Activated CD4-positive, alpha-beta T cell treated with anti-CD3 and anti-CD28 coated beads for 36 hours (primary cell): ENCODE measurements at regions of chr6 and their contacts with region 1.

Region 1: GRCh38 chr6:97282726-97283617 is at the start of gene MMS22L:
- DNase-seq: peak; percentile 96
- ATAC-seq: peak; percentile 98
- H3K4me3 Mint-ChIP-seq: peak within 1 kb of the TSS; percentile 76
- H3K27ac Mint-ChIP-seq: peak within 1 kb of the TSS; percentile 79
- H3K4me1 Mint-ChIP-seq: peaks cover 23% of the 10 kb centered on the region
- H3K27me3 Mint-ChIP-seq: no peaks in the 10 kb centered on the region
- total RNA-seq, gene MMS22L: 33.9 to 43.6 TPM

Region 2: DNA sequence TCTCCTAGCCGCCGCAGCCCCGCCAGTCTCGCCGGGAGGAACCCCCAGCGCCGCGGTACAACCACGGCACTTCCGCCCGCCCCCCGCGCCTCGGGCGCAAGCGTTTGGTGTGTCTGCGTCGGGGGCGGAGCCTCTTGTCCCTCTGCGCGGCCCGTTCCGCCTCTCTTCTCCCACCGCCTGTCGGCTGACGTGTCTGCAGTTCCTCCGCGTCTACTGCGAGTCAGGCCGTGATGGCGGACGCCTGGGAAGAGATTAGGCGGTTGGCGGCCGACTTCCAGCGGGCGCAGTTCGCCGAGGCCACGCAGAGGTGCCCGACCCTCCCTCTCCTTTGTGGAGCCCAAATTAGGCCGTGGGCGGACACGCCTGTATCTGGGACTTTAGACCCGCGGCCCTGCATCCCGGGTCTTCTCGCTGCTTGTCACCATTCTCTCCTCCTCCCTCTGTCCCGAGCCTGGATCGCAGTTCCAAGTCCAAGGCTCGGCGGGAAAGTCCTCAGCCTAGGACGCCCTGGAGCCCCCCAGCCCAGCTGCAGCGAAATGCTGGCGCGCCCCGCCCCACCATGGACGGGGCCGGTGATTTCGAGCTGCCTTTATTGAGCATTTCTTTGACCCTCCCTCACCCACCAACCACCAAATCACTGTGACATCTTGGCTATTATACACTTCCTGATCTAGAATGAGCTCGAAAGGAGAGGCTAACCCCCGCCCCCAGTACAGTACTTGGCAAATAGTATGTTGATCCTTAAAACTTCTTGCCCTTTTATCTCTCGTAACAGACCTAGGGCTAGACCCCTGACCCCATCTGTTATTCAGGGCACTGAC is 761.1 kb before region 1 on chr6 and contains the start of gene UFL1:
- CTCF ChIA-PET with region 1: no interaction called
- POLR2A ChIA-PET with region 1: no interaction called
- intact Hi-C with region 1: loop called in 1 of 2 experiments (anchors 1 kb)
- DNase-seq: peak; percentile 96
- ATAC-seq: peak; percentile 98
- H3K4me3 Mint-ChIP-seq: peak within 1 kb of the TSS; percentile 98
- H3K27ac Mint-ChIP-seq: peak within 1 kb of the TSS; percentile 99
- H3K4me1 Mint-ChIP-seq: peaks cover 16% of the 10 kb centered on the region
- H3K27me3 Mint-ChIP-seq: no peaks in the 10 kb centered on the region
- total RNA-seq, gene UFL1: 27.3 to 28.0 TPM

Region 3: GRCh38 chr6:96923871-96924493 is 359.0 kb before region 1 on chr6:
- CTCF ChIA-PET with region 1: no interaction called
- POLR2A ChIA-PET with region 1: no interaction called
- intact Hi-C with region 1: loop called (anchors 5 to 10 kb)
- DNase-seq: no peak
- ATAC-seq: peak; percentile 62
- H3K4me3 Mint-ChIP-seq: peak overlapping the region; percentile 88
- H3K27ac Mint-ChIP-seq: peak overlapping the region; percentile 81
- H3K4me1 Mint-ChIP-seq: peaks cover 28% of the 10 kb centered on the region
- H3K27me3 Mint-ChIP-seq: no peaks in the 10 kb centered on the region

Region 4: DNA sequence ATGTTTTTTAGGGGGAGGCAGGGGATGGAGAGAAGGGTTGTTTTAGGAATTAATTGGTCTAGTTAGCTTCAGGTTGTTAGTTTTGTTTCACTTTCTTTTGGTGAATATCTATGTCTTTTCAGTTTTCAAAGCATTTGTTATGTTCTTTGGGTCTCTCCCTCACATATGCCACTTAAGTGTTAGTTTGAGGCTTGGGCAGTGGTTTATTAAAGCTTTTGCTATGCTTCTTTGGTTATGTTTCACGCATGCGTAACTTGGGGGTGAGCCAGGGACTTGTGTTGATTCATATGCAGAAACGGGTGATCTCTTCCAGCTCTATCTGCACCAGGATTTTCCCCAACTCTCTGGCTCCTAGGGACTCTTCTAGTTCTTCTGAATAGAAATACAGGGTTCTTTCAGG is 11.5 kb after region 1 on chr6:
- CTCF ChIA-PET with region 1: no interaction called
- POLR2A ChIA-PET with region 1: no interaction called
- intact Hi-C with region 1: no loop called
- DNase-seq: no peak
- ATAC-seq: no peak
- H3K4me3 Mint-ChIP-seq: no peak overlapping the region
- H3K27ac Mint-ChIP-seq: no peak overlapping the region
- H3K4me1 Mint-ChIP-seq: no peaks in the 10 kb centered on the region
- H3K27me3 Mint-ChIP-seq: peaks cover 19% of the 10 kb centered on the region

Region 5: GRCh38 chr6:98834060-98835031 is 1551.4 kb after region 1 on chr6 and contains the start of gene POU3F2:
- CTCF ChIA-PET with region 1: no interaction called
- POLR2A ChIA-PET with region 1: no interaction called
- intact Hi-C with region 1: loop called in 1 of 2 experiments (anchors 5 kb)
- DNase-seq: peak; percentile 85
- ATAC-seq: peak; percentile 85
- H3K4me3 Mint-ChIP-seq: peak within 1 kb of the TSS; percentile 75
- H3K27ac Mint-ChIP-seq: no peak within 1 kb of the TSS
- H3K4me1 Mint-ChIP-seq: peaks cover 43% of the 10 kb centered on the region
- H3K27me3 Mint-ChIP-seq: peaks cover 64% of the 10 kb centered on the region
- total RNA-seq, gene POU3F2: not detected